ENCODE measurements at regions of chr10 and their contacts with region 1.

Region 1: GRCh38 chr10:511101-511848 is 178.2 kb downstream of the DIP2C start:
- DNase-seq: peak; percentile 87
- CTCF ChIP-seq: peak; percentile 99

Region 2: GRCh38 chr10:810351-810846 is 299.1 kb after region 1 on chr10:
- in situ Hi-C with region 1: loop called (anchors 25 kb)
- DNase-seq: no peak
- CTCF ChIP-seq: peak; percentile 54

Measured in GM13977 (cell line).